ENCODE measurements at regions of chr4 and their contacts with region 1.

Region 1: DNA sequence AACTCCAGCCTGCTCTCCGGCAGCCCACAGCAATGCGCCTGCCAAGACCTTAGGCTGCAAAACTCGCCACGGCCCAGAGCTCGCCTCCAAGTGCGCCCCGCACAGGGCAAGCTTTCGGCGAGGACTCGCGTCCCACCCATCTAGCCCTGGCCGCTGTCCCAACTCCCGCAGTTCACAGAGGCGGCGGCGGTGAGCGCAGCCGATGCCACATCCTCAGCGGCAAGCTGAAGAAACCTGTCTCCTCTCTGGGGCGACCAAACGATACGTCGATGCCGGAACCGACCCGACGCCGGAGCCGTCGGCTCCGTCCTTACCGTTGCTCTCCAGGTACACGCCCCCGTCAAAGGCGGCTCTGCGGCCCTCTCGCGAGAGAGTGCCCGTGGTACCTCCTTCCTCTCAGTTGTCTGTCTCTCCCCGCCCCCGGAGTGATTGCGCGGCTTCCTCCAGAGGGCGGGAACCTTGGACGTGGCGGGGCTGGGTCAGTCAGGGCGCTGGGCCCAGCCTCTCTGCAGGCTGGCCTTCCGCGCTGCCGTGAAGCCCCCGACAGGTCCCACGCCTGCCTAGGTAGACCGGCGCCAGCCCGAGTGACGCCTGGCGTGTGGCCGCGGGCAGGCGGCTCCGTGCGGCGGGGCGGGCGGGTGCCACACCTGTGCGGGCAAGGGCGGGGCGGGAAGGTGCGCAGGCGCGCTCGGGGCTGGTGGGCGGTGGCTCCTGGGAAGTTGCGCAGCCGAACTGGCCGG is 380 bp upstream of the RAB33B start:
- DNase-seq: peak; percentile 96 to 98 (median 98)
- ATAC-seq: peak; percentile 93
- H3K4me3 ChIP-seq: peak overlapping the region; percentile 97
- H3K4me3 Mint-ChIP-seq: peak overlapping the region; percentile 94 to 99 (median 97)
- H3K27ac ChIP-seq: peak overlapping the region; percentile 97
- H3K27ac Mint-ChIP-seq: peak overlapping the region; percentile 96 to 100 (median 99)
- H3K4me1 ChIP-seq: peaks cover 30 to 36% of the 10 kb centered on the region in 2 donors
- H3K4me1 Mint-ChIP-seq: peaks cover 38 to 82% (median 62%) of the 10 kb centered on the region in 7 donors
- H3K27me3 ChIP-seq: no peaks in the 10 kb centered on the region
- H3K27me3 Mint-ChIP-seq: no peaks in the 10 kb centered on the region

Region 2: DNA sequence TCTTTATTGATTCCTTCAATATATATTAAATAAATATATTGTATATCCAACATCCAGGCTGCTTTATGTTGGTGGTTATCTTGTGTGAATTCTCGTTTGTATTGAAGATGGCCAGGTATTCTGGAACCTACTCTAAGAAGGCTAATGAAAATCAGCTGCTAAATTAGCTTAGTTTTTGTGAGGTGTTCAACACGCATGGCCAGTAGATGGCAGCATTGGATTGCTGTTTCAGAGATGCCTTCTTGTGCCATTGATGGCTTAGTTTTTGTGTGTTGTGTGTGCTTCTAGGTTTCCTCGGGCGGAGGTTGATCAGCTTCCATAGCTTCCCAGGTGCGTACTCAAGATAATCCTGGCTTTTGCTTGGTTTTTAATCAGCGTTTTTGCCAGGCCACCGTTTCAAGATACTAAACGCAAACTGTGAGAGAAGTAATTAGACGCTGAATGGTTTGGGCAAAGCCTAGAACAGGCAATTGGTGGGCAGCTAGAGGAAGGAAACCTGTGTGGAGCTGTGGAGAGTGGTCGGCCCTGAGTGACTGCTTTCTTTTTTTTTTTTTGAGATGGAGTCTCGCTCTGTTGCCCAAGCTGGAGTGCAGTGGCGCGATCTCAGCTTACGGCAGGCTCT is 422.8 kb before region 1 on chr4:
- CTCF ChIA-PET with region 1: no interaction called
- POLR2A ChIA-PET with region 1: no interaction called
- intact Hi-C with region 1: loop called (anchors 5 kb)
- DNase-seq: peak; percentile 45 to 81 (median 74)
- ATAC-seq: peak; percentile 86
- H3K4me3 ChIP-seq: no peak overlapping the region
- H3K4me3 Mint-ChIP-seq: peak overlapping the region in 5 of 10 donors; percentile 3 to 58 (median 18)
- H3K27ac ChIP-seq: no peak overlapping the region
- H3K27ac Mint-ChIP-seq: peak overlapping the region in 2 of 9 donors; percentile 0 to 1
- H3K4me1 ChIP-seq: no peaks in the 10 kb centered on the region
- H3K4me1 Mint-ChIP-seq: peaks cover 5 to 20% (median 11%) of the 10 kb centered on the region in 7 donors
- H3K27me3 ChIP-seq: no peaks in the 10 kb centered on the region
- H3K27me3 Mint-ChIP-seq: no peaks in the 10 kb centered on the region

Region 3: DNA sequence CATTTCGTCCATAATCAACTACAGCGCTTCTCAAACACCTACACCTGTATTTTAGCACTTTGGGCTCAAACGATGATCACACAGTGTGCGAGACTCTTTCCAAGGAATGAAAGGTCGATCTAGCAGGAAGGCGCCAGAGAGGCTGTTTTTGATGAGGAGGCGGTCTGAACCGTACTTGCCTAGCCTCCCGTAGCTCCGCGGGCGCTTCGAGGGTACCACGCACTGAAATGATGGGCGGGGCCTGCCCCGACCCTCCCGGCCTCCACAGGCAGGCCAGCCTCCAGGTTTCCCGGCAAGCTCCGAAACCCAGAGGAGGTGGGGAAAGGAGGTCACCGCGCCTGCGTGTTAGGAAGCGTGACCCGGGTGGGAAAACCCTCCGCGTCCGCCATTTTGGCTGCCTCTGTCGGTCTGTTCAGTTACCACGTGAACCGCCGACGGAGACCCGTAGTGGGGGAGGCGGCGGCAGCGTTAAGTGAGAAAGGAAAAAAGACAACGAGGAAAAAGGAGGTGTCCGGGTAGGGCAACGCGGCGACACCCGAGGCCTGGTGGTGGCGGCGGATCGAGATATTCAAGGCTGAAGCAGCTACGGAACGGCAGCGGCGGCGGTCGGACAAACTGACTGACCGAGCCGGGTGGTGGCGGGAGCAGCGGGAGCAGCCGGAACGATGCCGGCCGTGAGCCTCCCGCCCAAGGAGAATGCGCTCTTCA is 152.3 kb before region 1 on chr4 and contains the start of gene NAA15:
- CTCF ChIA-PET with region 1: interaction called, 3 read pairs
- POLR2A ChIA-PET with region 1: interaction called, 13 read pairs
- intact Hi-C with region 1: loop called (anchors 1 kb)
- DNase-seq: peak; percentile 88 to 99 (median 97)
- ATAC-seq: peak; percentile 95
- H3K4me3 ChIP-seq: peak within 1 kb of the TSS; percentile 83
- H3K4me3 Mint-ChIP-seq: peak within 1 kb of the TSS; percentile 96 to 100 (median 100)
- H3K27ac ChIP-seq: peak within 1 kb of the TSS; percentile 92
- H3K27ac Mint-ChIP-seq: peak within 1 kb of the TSS; percentile 97 to 100 (median 99)
- H3K4me1 ChIP-seq: peaks cover 22 to 28% of the 10 kb centered on the region in 2 donors
- H3K4me1 Mint-ChIP-seq: peaks cover 17 to 76% (median 58%) of the 10 kb centered on the region in 7 donors
- H3K27me3 ChIP-seq: no peaks in the 10 kb centered on the region
- H3K27me3 Mint-ChIP-seq: no peaks in the 10 kb centered on the region
- total RNA-seq, gene NAA15: 41.2 to 67.4 (median 49.0) TPM

Region 4: GRCh38 chr4:139472852-139473251 is 19.3 kb after region 1 on chr4:
- CTCF ChIA-PET with region 1: interaction called, 5 read pairs
- POLR2A ChIA-PET with region 1: no interaction called
- intact Hi-C with region 1: loop called in 1 of 2 experiments (anchors 2 kb)
- DNase-seq: no peak
- ATAC-seq: no peak
- H3K4me3 ChIP-seq: no peak overlapping the region
- H3K4me3 Mint-ChIP-seq: no peak overlapping the region
- H3K27ac ChIP-seq: no peak overlapping the region
- H3K27ac Mint-ChIP-seq: no peak overlapping the region
- H3K4me1 ChIP-seq: no peaks in the 10 kb centered on the region
- H3K4me1 Mint-ChIP-seq: peaks cover 0 to 30% (median 25%) of the 10 kb centered on the region in 7 donors
- H3K27me3 ChIP-seq: no peaks in the 10 kb centered on the region
- H3K27me3 Mint-ChIP-seq: no peaks in the 10 kb centered on the region

Region 5: GRCh38 chr4:139530833-139531427 is 77.4 kb after region 1 on chr4:
- CTCF ChIA-PET with region 1: interaction called, 3 read pairs
- POLR2A ChIA-PET with region 1: interaction called, 3 read pairs
- intact Hi-C with region 1: loop called (anchors 1 to 2 kb)
- DNase-seq: peak; percentile 29 to 63 (median 50)
- ATAC-seq: peak; percentile 79
- H3K4me3 ChIP-seq: no peak overlapping the region
- H3K4me3 Mint-ChIP-seq: no peak overlapping the region
- H3K27ac ChIP-seq: no peak overlapping the region
- H3K27ac Mint-ChIP-seq: no peak overlapping the region
- H3K4me1 ChIP-seq: peaks cover 0 to 14% of the 10 kb centered on the region in 2 donors
- H3K4me1 Mint-ChIP-seq: peaks cover 0 to 10% (median 0%) of the 10 kb centered on the region in 7 donors
- H3K27me3 ChIP-seq: no peaks in the 10 kb centered on the region
- H3K27me3 Mint-ChIP-seq: no peaks in the 10 kb centered on the region

Region 6: DNA sequence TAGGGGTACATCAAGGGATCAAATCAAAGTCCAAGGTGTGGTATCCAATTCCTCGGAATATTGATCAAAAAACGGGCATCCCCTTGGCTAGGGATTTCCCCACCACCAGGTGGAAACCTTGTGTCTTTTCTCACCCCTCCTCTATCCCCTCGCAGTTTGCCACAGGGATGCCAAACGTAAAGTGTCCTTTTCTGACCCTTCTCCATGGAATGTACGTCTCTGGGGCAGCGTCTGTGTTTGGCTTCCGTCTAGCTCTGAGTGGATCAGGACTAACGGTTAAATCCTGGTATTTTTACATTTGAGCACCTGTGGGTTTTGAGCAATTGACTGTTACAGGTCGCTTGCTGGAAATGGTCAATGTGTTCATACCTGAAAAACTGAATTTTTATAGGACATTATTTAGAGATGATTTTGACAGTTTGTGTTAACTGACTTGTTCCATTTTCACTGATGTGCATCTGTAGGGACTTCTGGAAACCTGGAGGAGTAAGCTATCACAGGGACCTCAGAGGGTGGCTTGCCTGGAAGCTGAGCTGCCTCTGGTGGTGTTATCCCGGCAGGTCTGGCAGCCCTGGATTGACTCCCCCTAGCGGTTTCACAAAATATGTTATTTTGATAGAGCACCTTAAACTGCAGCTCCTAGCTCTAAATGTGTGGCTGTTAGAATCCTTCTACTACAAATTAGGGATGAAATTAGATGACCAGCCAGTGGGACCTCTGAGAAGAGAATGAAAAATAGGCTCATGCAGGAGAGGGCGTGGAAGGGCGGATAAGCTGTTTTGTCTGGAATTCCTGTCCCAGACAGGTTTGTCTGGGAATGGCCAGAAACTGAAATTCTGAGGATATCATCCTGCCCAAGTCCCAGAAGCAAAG is 203.3 kb after region 1 on chr4:
- CTCF ChIA-PET with region 1: no interaction called
- POLR2A ChIA-PET with region 1: no interaction called
- intact Hi-C with region 1: loop called (anchors 1 to 2 kb)
- DNase-seq: peak in 8 of 9 donors; percentile 29 to 67 (median 56)
- ATAC-seq: peak; percentile 87
- H3K4me3 ChIP-seq: no peak overlapping the region
- H3K4me3 Mint-ChIP-seq: peak overlapping the region in 8 of 10 donors; percentile 5 to 86 (median 22)
- H3K27ac ChIP-seq: no peak overlapping the region
- H3K27ac Mint-ChIP-seq: peak overlapping the region in 5 of 9 donors; percentile 31 to 98 (median 87)
- H3K4me1 ChIP-seq: peaks cover 0 to 5% of the 10 kb centered on the region in 2 donors
- H3K4me1 Mint-ChIP-seq: peaks cover 17 to 41% (median 18%) of the 10 kb centered on the region in 7 donors
- H3K27me3 ChIP-seq: no peaks in the 10 kb centered on the region
- H3K27me3 Mint-ChIP-seq: peaks cover 0 to 5% (median 5%) of the 10 kb centered on the region in 5 donors

Region 7: GRCh38 chr4:139808808-139809756 is 355.5 kb after region 1 on chr4:
- CTCF ChIA-PET with region 1: no interaction called
- POLR2A ChIA-PET with region 1: no interaction called
- intact Hi-C with region 1: no loop called
- DNase-seq: no peak
- ATAC-seq: no peak
- H3K4me3 ChIP-seq: no peak overlapping the region
- H3K4me3 Mint-ChIP-seq: no peak overlapping the region
- H3K27ac ChIP-seq: no peak overlapping the region
- H3K27ac Mint-ChIP-seq: no peak overlapping the region
- H3K4me1 ChIP-seq: no peaks in the 10 kb centered on the region
- H3K4me1 Mint-ChIP-seq: peaks cover 0 to 8% (median 0%) of the 10 kb centered on the region in 7 donors
- H3K27me3 ChIP-seq: no peaks in the 10 kb centered on the region
- H3K27me3 Mint-ChIP-seq: peaks cover 0 to 10% (median 0%) of the 10 kb centered on the region in 5 donors

Region 8: GRCh38 chr4:140523857-140524742 is 1070.6 kb after region 1 on chr4 and contains the start of gene ELMOD2:
- CTCF ChIA-PET with region 1: no interaction called
- POLR2A ChIA-PET with region 1: no interaction called
- intact Hi-C with region 1: loop called in 1 of 2 experiments (anchors 1 kb)
- DNase-seq: peak; percentile 95 to 98 (median 97)
- ATAC-seq: peak; percentile 100
- H3K4me3 ChIP-seq: peak within 1 kb of the TSS; percentile 70
- H3K4me3 Mint-ChIP-seq: peak within 1 kb of the TSS; percentile 78 to 95 (median 88)
- H3K27ac ChIP-seq: peak within 1 kb of the TSS; percentile 71
- H3K27ac Mint-ChIP-seq: peak within 1 kb of the TSS; percentile 78 to 93 (median 86)
- H3K4me1 ChIP-seq: peaks cover 12 to 18% of the 10 kb centered on the region in 2 donors
- H3K4me1 Mint-ChIP-seq: peaks cover 8 to 39% (median 29%) of the 10 kb centered on the region in 7 donors
- H3K27me3 ChIP-seq: no peaks in the 10 kb centered on the region
- H3K27me3 Mint-ChIP-seq: peaks cover 0 to 3% (median 0%) of the 10 kb centered on the region in 5 donors
- total RNA-seq, gene ELMOD2: 12.8 to 29.2 (median 17.7) TPM